HCT116 (cell line): ENCODE measurements at regions of chr4 and their contacts with region 1.

Region 1: DNA sequence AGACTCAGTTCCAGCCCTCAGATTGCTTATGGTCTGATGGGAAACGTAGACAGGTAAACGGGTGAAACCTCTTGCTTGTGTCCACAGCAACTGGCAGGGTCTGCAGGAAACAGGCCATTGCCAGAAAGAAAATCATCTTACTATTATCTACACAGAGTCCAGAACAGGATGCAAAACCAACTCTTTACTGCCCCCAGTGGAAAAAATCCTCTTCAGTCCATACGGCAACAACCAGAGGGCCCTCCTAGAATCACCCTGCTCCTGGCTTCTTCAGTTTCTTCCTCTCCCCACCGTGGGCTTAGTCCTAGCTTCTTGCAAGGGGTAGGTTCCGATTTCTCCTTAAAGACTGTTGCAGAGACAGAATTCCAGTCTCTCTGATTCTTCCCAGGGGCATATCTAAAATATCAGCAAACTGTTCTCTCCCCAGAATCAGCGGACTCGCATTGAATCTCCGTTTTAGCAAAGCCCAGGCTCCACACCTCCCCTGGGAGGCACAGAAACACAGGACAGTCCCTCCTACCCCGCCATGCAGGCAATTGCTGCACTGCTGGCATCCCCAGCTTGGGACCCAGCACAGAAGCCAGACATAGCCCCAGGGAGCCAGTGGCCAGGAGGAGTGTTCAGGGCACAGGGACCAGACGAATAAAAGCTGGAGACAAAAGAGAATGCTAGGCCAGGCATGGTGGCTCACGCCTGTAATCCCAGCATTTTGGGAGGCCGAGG is 41.0 kb upstream of the SH3RF1 start:
- DNase-seq: peak; percentile 66
- ATAC-seq: peak; percentile 96
- H3K4me3 ChIP-seq: no peak overlapping the region
- H3K27ac ChIP-seq: peak overlapping the region; percentile 22; the same call in 1 of the 2 replicates
- H3K4me1 ChIP-seq: peaks cover 15 to 40% of the 10 kb centered on the region in 2 experiments
- H3K27me3 ChIP-seq: no peaks in the 10 kb centered on the region
- CTCF ChIP-seq: peak; percentile 61 to 81 (median 68); a peak in 5 of 6 replicates
- POLR2A ChIP-seq: no peak
- RAD21 ChIP-seq: peak; percentile 75

Region 2: DNA sequence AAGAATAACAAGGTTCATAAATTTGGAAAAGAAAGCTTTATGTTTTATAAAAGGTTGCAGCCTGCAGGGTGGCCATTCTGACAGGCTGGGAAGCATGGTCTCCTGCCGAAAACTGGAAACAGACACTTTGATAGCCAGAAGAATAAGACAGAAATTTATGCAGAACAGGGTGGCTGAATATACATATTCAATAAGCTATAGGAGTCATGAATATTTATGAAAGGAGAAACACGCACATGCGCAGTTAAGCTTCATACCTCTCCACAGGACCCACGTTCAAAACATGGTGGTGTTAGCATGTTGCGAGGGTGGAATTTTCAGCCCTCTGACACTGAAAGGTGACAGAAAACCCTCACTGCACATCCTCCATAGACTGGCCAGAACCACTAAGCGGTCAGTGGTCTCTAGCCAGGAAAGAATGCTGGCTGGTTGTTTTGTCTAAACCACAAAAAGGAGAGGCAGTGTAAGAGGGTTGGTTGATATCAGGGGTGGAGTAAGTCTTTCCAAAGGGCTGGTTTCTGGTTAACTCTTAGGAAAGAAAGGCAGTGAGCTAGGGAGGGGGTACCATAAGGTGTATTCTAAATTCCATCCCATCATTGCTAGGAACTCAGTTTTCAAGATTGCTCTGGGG is 1161.3 kb before region 1 on chr4:
- CTCF ChIA-PET with region 1: no interaction called
- POLR2A ChIA-PET with region 1: no interaction called
- RAD21 ChIA-PET with region 1: no interaction called
- intact Hi-C with region 1: no loop called
- DNase-seq: no peak
- ATAC-seq: no peak
- H3K4me3 ChIP-seq: no peak overlapping the region
- H3K27ac ChIP-seq: peak overlapping the region; percentile 71
- H3K4me1 ChIP-seq: peaks cover 8 to 12% of the 10 kb centered on the region in 2 experiments; a peak in 3 of 4 replicates
- H3K27me3 ChIP-seq: no peaks in the 10 kb centered on the region
- CTCF ChIP-seq: no peak
- POLR2A ChIP-seq: no peak
- RAD21 ChIP-seq: no peak

Region 3: GRCh38 chr4:168942985-168943384 is 368.8 kb before region 1 on chr4:
- CTCF ChIA-PET with region 1: no interaction called
- POLR2A ChIA-PET with region 1: no interaction called
- RAD21 ChIA-PET with region 1: no interaction called
- intact Hi-C with region 1: no loop called
- DNase-seq: peak; percentile 15
- ATAC-seq: peak; percentile 78
- H3K4me3 ChIP-seq: no peak overlapping the region
- H3K27ac ChIP-seq: no peak overlapping the region
- H3K4me1 ChIP-seq: no peaks in the 10 kb centered on the region
- H3K27me3 ChIP-seq: no peaks in the 10 kb centered on the region
- CTCF ChIP-seq: peak; percentile 16 to 88 (median 77); a peak in 4 of 6 replicates
- POLR2A ChIP-seq: no peak
- RAD21 ChIP-seq: peak; percentile 49

Region 4: DNA sequence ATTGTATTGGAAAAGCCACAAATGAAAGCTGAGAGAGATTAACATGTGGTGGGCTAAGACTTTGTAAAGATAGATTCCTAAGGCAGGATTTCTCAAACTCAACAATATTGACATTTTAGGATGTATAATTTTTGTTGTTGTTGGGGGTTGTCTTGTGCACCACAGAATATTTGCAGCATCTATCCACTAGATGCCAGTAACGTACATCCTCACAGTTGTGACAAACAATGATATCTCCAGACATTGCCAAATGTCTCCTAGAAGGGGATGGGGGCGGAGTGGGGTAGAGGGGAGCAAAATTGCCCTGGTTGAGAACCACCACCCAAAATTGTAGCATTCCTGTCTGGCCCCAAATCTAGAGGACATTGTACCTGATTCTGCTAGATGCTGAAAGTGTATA is 287.0 kb before region 1 on chr4:
- CTCF ChIA-PET with region 1: no interaction called
- POLR2A ChIA-PET with region 1: no interaction called
- RAD21 ChIA-PET with region 1: no interaction called
- intact Hi-C with region 1: loop called (anchors 5 kb)
- DNase-seq: peak; percentile 15
- ATAC-seq: peak; percentile 93
- H3K4me3 ChIP-seq: no peak overlapping the region
- H3K27ac ChIP-seq: no peak overlapping the region
- H3K4me1 ChIP-seq: peaks cover 2 to 9% of the 10 kb centered on the region in 2 experiments; a peak in 3 of 4 replicates
- H3K27me3 ChIP-seq: no peaks in the 10 kb centered on the region
- CTCF ChIP-seq: peak; percentile 62 to 76 (median 63); a peak in 5 of 6 replicates
- POLR2A ChIP-seq: no peak
- RAD21 ChIP-seq: peak; percentile 94